ENCODE measurements at regions of chr17 and their contacts with region 1.

Region 1: DNA sequence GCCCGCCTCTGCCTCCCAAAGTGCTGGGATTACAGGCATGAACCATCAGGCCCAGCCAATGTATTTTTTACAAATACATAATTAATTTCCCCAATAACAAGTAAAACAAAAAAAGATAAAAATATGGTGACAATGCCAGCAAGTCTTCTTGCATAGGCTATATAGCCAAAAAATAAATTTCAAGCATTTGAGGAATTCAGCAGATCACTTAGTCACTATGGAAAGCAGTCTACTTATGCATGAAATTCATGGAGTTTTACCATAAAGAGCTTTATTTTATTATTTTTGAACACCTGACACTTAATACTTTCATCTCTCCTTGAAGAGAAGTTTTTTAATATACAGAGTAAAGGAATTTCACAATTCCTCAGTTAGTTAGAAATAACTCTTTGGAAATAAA is 56.4 kb downstream of the BRIP1 start:
- DNase-seq: no peak
- ATAC-seq: no peak
- H3K4me3 ChIP-seq: no peak overlapping the region
- H3K27ac ChIP-seq: no peak overlapping the region
- H3K4me1 ChIP-seq: no peaks in the 10 kb centered on the region
- H3K27me3 ChIP-seq: no peaks in the 10 kb centered on the region
- CTCF ChIP-seq: no peak

Region 2: GRCh38 chr17:61349350-61349749 is 457.6 kb before region 1 on chr17:
- CTCF ChIA-PET with region 1: no interaction called
- POLR2A ChIA-PET with region 1: no interaction called
- in situ Hi-C with region 1: no loop called
- intact Hi-C with region 1: no loop called
- DNase-seq: no peak
- ATAC-seq: no peak
- H3K4me3 ChIP-seq: no peak overlapping the region
- H3K27ac ChIP-seq: no peak overlapping the region; the same call in 1 of the 2 replicates
- H3K4me1 ChIP-seq: peaks cover 14% of the 10 kb centered on the region
- H3K27me3 ChIP-seq: no peaks in the 10 kb centered on the region
- CTCF ChIP-seq: no peak; the same call in 1 of the 2 replicates

Region 3: DNA sequence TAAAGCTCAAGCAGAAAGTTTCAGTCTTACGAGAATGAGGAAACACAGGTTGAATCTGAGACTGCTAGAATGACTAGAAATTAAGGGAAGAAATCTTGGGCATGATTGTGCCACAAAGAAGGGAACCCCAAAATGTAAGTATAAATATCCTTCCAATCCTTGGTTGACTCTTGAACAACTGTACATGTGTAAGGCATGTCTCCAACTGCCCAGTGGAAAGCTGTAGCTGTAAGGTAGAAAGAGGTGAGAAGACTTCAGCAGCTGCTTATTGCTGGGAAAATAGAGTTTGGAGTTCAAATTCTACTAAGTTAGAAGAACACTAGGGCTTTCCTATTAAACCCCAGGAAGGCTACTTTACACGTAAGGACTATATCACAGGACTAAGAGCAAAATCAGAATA is 156.2 kb before region 1 on chr17:
- CTCF ChIA-PET with region 1: no interaction called
- POLR2A ChIA-PET with region 1: interaction called, 17 read pairs
- in situ Hi-C with region 1: no loop called
- intact Hi-C with region 1: no loop called
- DNase-seq: no peak
- ATAC-seq: no peak
- H3K4me3 ChIP-seq: no peak overlapping the region
- H3K27ac ChIP-seq: no peak overlapping the region
- H3K4me1 ChIP-seq: no peaks in the 10 kb centered on the region
- H3K27me3 ChIP-seq: no peaks in the 10 kb centered on the region
- CTCF ChIP-seq: no peak

Region 4: GRCh38 chr17:61700252-61700651 is 106.7 kb before region 1 on chr17:
- CTCF ChIA-PET with region 1: no interaction called
- POLR2A ChIA-PET with region 1: no interaction called
- in situ Hi-C with region 1: no loop called
- intact Hi-C with region 1: no loop called
- DNase-seq: no peak
- ATAC-seq: no peak
- H3K4me3 ChIP-seq: no peak overlapping the region
- H3K27ac ChIP-seq: no peak overlapping the region
- H3K4me1 ChIP-seq: no peaks in the 10 kb centered on the region
- H3K27me3 ChIP-seq: no peaks in the 10 kb centered on the region
- CTCF ChIP-seq: no peak

Measured in Panc1 (cell line).